ENCODE measurements at regions of chr1 and their contacts with region 1.

Region 1: DNA sequence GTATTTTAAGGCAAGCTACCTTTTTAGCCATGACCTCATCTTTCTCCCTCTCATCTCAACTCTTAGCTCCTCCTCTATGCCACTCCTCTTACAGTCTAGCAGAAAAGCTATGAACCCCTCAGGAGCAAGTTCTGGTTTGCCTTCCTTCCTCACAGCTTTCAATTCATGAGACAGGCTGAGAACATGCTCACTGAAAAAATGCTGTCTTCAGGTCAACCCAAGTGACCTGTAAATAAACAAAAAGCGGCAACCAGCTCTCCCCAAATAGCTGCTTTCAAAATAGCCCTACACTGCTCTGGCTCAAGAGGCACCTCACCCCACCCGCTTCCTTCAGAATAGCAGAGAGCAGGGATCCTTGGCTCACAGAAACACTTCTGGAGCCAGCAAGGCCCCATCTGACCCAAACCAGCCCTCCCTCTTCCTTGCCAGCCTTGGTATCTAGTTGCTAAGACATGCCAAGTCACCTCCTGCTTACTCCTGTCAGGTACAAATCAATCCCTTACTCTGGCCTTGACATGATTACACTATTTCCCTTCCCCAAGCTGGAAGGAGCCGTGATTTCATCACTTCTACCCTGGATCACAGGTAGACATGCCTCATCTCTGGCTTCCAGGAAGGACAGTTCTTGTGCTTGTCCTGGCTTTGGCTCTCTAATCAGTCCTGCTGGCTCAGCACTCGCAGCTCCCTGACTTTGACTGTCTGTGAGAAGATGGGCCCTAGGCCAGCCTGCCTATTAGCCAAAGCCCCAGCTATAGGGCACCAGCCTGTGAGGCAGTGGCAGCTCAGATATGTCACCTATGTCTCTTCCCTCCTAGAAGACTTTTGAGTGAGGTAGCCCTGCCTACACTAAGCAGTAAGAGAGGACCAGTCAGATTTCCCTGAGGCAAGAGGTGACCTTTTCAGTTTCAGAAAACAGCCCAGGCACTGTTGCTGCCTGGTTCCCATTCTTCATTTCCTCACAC is 8.8 kb upstream of the MUTYH start:
- DNase-seq: no peak
- ATAC-seq: peak in 1 of 2 experiments; percentile 13; a peak in 3 of 6 replicates
- H3K4me3 ChIP-seq: no peak overlapping the region
- H3K27ac ChIP-seq: no peak overlapping the region
- H3K4me1 ChIP-seq: peaks cover 8% of the 10 kb centered on the region; the same call in 1 of the 3 replicates
- CTCF ChIP-seq: no peak
- EP300 ChIP-seq: no peak
- POLR2A ChIP-seq: no peak
- RAD21 ChIP-seq: no peak

Region 2: DNA sequence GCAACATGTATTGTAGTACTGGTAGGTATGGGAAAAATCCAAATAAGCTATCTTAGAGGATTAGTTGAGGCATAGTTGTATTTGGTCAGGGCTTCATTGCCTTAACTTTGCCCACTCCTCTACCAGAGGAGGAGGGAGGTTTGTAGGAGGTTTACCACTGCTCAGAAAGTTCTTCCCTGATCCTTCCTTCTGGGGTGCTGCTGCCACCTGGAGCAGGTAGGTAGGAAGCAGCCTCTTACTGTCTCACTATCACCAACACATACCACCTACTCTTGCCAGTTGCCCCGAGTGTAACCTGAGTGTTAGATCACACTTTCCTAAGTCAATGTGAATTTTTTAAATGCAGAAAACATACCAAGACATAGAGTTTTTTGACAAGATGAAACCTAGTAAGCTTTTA is 118.5 kb before region 1 on chr1:
- CTCF ChIA-PET with region 1: no interaction called
- POLR2A ChIA-PET with region 1: no interaction called
- DNase-seq: no peak
- ATAC-seq: no peak
- H3K4me3 ChIP-seq: no peak overlapping the region
- H3K27ac ChIP-seq: no peak overlapping the region
- H3K4me1 ChIP-seq: no peaks in the 10 kb centered on the region
- CTCF ChIP-seq: no peak
- EP300 ChIP-seq: no peak
- POLR2A ChIP-seq: no peak
- RAD21 ChIP-seq: peak in 1 of 2 experiments; percentile 23; a peak in 2 of 5 replicates

Region 3: DNA sequence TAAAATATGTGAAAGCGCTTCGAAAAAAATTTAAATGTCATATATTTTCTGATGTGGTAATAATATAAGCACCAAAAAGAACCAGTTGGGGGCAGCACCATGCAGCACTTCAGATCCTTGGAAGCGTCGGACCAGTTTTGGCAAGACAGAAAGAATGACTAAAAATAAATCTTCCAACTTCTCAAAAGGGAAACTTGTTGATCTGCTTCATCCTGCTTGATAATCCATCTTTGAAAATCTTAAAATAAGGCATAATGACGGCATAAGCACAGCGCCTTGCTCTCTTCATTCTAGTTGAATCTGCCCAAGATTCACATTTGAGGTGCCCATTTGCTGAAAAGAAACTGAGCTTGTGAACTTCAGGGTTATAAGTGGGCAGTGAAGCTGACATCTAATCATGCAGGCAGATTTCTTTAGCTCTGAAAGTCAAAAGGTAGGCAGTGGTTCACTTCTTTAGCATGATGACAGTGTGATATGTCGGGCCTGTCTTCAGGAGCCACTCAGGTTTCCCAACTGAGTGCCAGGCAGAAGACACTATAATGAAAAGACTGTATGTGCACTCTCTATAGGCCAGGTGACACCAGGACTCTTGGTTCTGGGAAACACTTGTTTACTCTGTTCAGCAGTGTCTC is 11.0 kb after region 1 on chr1:
- CTCF ChIA-PET with region 1: interaction called, 43 read pairs
- POLR2A ChIA-PET with region 1: no interaction called
- DNase-seq: peak in 1 of 2 experiments; percentile 48
- ATAC-seq: peak; percentile 66 to 75; a peak in 4 of 6 replicates
- H3K4me3 ChIP-seq: no peak overlapping the region
- H3K27ac ChIP-seq: no peak overlapping the region
- H3K4me1 ChIP-seq: no peaks in the 10 kb centered on the region
- CTCF ChIP-seq: peak; percentile 77
- EP300 ChIP-seq: no peak
- POLR2A ChIP-seq: no peak
- RAD21 ChIP-seq: peak; percentile 80

Region 4: DNA sequence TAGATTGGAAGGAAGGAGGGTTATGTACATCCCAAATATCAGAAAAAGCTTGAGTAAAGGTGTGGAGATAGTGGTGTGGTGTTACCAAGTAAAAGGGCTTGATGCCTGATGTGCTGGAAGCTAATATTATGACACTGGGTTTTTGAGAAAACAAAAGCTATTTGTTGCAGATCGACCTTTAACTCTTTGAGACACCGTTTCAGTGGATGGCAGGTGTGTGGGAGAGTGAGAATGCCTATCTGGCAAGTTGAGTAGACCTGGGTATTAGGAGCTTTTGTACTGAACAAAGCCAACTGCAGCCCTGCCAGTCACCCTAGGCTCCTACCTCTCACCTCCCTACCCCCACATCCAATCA is 152.5 kb after region 1 on chr1:
- CTCF ChIA-PET with region 1: no interaction called
- POLR2A ChIA-PET with region 1: no interaction called
- DNase-seq: no peak
- ATAC-seq: no peak
- H3K4me3 ChIP-seq: no peak overlapping the region
- H3K27ac ChIP-seq: no peak overlapping the region; a peak in 1 of 6 replicates
- H3K4me1 ChIP-seq: peaks cover 25% of the 10 kb centered on the region
- CTCF ChIP-seq: no peak
- EP300 ChIP-seq: no peak
- POLR2A ChIP-seq: no peak
- RAD21 ChIP-seq: no peak